ENCODE measurements at regions of chr6 and their contacts with region 1.

Region 1: GRCh38 chr6:50602292-50602691 is 111.0 kb upstream of the TFAP2D start:
- DNase-seq: peak; percentile 9
- CTCF ChIP-seq: peak; percentile 66

Region 2: DNA sequence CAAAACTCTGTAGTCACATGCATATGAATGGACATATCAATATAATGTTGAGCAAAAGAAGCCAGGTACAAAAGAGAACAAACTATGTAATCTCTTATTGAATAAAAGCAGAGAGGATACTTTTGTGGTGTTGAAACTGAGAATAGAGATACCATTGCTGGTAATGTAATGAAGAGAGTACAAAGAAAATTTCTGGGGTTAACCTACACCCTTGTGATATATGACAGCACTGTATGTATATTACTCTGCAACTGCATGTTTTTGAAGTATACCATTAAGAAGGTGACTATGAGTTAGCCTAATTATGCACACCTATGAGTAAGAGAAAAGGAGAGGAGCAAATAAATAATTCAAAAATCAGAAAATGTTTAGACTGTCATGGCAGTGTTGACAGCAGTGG is 283.8 kb before region 1 on chr6:
- CTCF ChIA-PET with region 1: no interaction called
- POLR2A ChIA-PET with region 1: no interaction called
- DNase-seq: no peak
- CTCF ChIP-seq: no peak

Region 3: DNA sequence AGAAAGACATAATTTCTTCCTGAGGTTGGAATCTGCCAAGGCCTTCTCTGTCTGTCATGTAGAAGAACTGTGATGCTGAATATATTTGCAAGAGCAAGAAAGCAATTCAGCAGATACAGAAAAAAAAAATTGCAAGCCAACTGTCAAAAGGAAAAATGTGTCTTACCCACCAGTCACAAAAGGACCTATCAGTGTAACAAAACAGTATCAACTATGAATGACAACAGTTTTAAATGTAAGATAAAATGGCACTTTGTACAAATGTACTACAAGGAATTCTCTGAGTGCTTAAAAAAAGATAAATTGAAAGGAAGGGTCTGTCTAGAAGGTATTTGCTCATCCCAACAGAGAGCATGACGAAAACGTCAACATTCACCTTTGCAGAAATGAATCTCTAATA is 74.3 kb before region 1 on chr6:
- CTCF ChIA-PET with region 1: no interaction called
- POLR2A ChIA-PET with region 1: no interaction called
- DNase-seq: no peak
- CTCF ChIP-seq: no peak

Region 4: GRCh38 chr6:50591135-50591534 is 11.2 kb before region 1 on chr6:
- CTCF ChIA-PET with region 1: interaction called, 20 read pairs
- POLR2A ChIA-PET with region 1: no interaction called
- DNase-seq: no peak
- CTCF ChIP-seq: no peak

Measured in GM10248 (cell line).